PC-3 (cell line): ENCODE measurements at regions of chr3 and their contacts with region 1.

Region 1: DNA sequence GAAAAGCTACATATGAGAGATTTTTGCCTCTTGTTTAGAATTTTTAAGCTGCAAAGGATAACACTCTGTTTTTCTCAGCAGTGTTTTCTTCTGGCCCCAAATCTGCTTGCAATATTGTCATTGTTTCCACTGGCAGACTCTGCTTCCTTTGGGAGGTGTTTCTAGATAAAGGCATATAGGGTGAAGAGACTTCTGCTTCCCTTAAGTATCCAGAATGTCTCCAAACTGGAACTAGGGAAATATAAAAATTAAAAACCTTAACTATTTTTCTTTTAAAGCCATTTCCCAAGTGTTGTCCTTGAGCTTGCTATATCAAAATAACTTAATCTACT is 225.8 kb downstream of the CGGBP1 start:
- DNase-seq: no peak
- ATAC-seq: no peak; the same call in 1 of the 2 replicates
- H3K4me3 ChIP-seq: no peak overlapping the region; the same call in 1 of the 2 replicates
- H3K27ac ChIP-seq: no peak overlapping the region
- H3K4me1 ChIP-seq: peaks cover 8% of the 10 kb centered on the region; the same call in 1 of the 2 replicates
- H3K27me3 ChIP-seq: no peaks in the 10 kb centered on the region
- CTCF ChIP-seq: no peak

Region 2: GRCh38 chr3:87563712-87564111 is 269.3 kb before region 1 on chr3:
- CTCF ChIA-PET with region 1: no interaction called
- POLR2A ChIA-PET with region 1: no interaction called
- intact Hi-C with region 1: loop called (anchors 10 kb)
- DNase-seq: peak; percentile 48
- ATAC-seq: peak; percentile 93
- H3K4me3 ChIP-seq: no peak overlapping the region
- H3K27ac ChIP-seq: no peak overlapping the region
- H3K4me1 ChIP-seq: 0 out of 2 replicates have a peak, but pooled peaks cover 5% of the 10 kb centered on the region
- H3K27me3 ChIP-seq: no peaks in the 10 kb centered on the region
- CTCF ChIP-seq: no peak

Region 3: GRCh38 chr3:87771341-87772192 is 61.4 kb before region 1 on chr3:
- CTCF ChIA-PET with region 1: no interaction called
- POLR2A ChIA-PET with region 1: no interaction called
- intact Hi-C with region 1: no loop called
- DNase-seq: peak; percentile 62
- ATAC-seq: peak; percentile 56
- H3K4me3 ChIP-seq: no peak overlapping the region
- H3K27ac ChIP-seq: no peak overlapping the region
- H3K4me1 ChIP-seq: peaks cover 5% of the 10 kb centered on the region
- H3K27me3 ChIP-seq: no peaks in the 10 kb centered on the region
- CTCF ChIP-seq: peak; percentile 90